A673 (cell line): ENCODE measurements at regions of chr19 and their contacts with region 1.

Region 1: DNA sequence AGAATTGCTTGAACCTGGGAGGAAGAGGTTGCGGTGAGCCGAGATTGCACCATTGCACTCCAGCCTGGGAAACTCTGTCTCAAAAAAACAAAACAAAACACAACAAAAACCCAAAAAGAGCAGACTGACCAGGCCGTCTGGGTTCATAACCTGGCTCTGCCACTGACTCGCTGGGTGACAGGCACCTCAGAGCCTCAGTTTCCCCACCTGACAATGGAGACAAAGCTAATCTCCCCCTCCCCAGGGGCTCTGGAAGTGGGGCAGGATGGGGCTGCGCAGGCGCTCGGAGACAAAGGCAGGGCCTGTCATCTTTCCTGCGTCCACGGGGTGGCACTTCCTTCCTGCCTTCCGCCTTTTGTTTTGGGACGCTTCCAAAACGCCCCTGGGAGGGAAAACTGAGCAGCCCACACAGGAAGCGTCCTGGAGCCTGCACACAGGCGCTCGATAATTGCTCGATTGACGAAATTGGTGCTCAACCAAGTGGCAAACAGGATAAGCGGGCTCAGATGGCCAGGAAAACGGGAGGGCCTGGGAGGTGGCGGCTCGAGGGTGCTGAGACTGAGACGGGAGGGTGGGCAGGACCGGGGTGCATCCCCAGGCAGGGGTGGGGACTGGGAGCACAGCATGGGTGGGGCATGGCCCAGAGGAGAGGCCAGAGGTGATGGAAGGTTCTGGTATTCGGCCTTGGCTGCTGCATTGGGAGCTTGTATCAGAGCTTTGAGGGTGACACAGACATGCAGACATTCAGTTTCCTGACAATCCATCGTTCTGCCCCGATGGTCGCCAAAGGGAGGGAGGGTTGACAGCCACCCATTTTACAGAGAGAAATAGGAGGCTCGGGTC is 17.8 kb downstream of the SPC24 start:
- DNase-seq: peak; percentile 98
- H3K4me3 ChIP-seq: peak overlapping the region; percentile 23
- H3K27ac ChIP-seq: peak overlapping the region; percentile 81
- H3K4me1 ChIP-seq: peaks cover 35% of the 10 kb centered on the region
- H3K27me3 ChIP-seq: no peaks in the 10 kb centered on the region
- CTCF ChIP-seq: peak; percentile 86

Region 2: GRCh38 chr19:11014403-11014911 is 123.3 kb before region 1 on chr19:
- CTCF ChIA-PET with region 1: no interaction called
- POLR2A ChIA-PET with region 1: no interaction called
- intact Hi-C with region 1: no loop called
- DNase-seq: no peak
- H3K4me3 ChIP-seq: no peak overlapping the region
- H3K27ac ChIP-seq: no peak overlapping the region
- H3K4me1 ChIP-seq: no peaks in the 10 kb centered on the region
- H3K27me3 ChIP-seq: no peaks in the 10 kb centered on the region
- CTCF ChIP-seq: no peak

Region 3: DNA sequence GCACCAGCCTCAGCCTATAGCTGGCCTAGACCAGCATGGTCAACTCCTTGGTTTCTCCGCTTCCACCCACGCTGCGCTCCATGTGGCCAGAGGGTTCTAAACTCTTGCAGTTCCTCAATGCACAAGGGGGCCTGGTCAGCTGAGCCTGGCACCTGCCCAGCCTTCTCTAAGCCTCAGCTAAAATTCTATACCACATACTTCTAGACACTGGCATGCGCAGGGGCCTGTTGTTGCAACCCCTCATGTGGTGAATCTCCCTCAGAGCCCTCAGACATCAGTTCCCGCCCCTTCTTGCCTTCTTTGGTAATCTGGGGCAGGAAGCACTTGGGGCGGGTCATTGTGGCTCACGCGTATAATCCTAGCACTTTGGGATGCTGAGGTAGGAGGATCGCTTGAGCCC is 68.2 kb before region 1 on chr19:
- CTCF ChIA-PET with region 1: no interaction called
- POLR2A ChIA-PET with region 1: no interaction called
- intact Hi-C with region 1: no loop called
- DNase-seq: no peak
- H3K4me3 ChIP-seq: no peak overlapping the region
- H3K27ac ChIP-seq: no peak overlapping the region
- H3K4me1 ChIP-seq: no peaks in the 10 kb centered on the region
- H3K27me3 ChIP-seq: no peaks in the 10 kb centered on the region
- CTCF ChIP-seq: no peak

Region 4: DNA sequence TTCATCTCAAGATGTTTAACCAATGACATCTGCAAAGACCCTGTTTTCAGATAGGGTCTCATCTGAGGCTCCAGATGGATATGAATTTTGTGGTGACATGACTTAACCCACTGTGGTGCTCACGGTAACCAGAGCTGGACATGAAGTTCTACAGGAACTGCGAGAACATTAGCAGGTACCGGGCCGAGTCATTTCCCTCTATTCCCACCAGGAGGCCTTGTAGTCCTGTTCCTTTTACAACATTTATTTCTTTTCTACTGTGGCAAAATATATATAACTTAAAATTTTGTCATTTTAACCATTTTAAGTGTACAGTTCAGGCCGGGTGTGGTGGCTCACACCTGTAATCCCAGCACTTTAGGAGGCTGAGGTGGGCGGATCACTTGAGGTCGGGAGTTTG is 150.6 kb after region 1 on chr19:
- CTCF ChIA-PET with region 1: no interaction called
- POLR2A ChIA-PET with region 1: no interaction called
- intact Hi-C with region 1: loop called (anchors 5 kb)
- DNase-seq: no peak
- H3K4me3 ChIP-seq: no peak overlapping the region
- H3K27ac ChIP-seq: no peak overlapping the region
- H3K4me1 ChIP-seq: peaks cover 4% of the 10 kb centered on the region
- H3K27me3 ChIP-seq: no peaks in the 10 kb centered on the region
- CTCF ChIP-seq: peak; percentile 44; the same call in 1 of the 2 replicates